A673 (cell line): ENCODE measurements at regions of chr11 and their contacts with region 1.

Region 1: DNA sequence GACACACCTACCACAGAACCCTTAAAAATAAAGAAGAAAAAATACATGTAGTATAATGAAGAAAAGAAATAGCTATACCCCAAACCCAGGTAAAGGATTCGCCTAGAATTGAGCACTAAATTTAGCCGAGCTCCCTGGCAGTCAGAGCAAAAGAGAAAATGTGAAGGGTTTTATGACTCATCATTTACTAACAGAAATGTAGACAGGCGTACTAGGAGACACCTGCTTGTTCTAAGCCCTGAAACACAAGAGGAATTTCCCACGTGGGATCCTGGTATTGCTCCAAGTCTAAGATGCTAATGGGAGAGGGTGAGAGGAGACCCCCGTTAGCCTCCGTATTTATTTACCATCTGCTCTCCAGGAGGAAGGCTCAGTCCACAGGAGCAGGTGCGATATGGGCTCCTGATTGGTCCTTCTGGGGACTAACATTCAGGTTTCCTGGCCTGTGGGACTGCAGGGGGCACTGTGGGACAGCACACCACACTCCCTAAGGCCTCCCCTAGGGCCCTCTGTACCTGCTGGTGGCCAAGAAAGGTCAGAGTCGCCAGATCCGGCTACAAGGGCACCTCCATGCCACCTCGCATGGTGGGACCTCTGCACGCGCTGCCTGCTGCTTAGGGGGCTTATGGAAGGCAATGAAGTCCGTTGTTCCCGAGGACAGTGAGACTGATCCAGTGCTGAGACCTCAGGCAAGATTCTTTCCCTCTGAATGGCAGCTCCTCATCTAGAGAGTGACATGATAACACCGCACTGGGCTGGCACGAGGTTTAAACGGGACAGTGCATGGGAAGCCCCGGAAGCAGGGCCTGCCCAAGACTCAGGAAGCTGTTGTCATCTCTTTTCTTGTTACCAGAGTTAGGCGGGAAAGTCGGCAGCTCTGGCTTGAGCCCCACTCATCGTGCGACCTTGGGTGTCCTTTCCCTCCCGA is 25.8 kb downstream of the KCNC1 start:
- DNase-seq: peak; percentile 39
- H3K4me3 ChIP-seq: no peak overlapping the region
- H3K27ac ChIP-seq: no peak overlapping the region
- H3K4me1 ChIP-seq: no peaks in the 10 kb centered on the region
- H3K27me3 ChIP-seq: no peaks in the 10 kb centered on the region
- CTCF ChIP-seq: peak; percentile 55

Region 2: DNA sequence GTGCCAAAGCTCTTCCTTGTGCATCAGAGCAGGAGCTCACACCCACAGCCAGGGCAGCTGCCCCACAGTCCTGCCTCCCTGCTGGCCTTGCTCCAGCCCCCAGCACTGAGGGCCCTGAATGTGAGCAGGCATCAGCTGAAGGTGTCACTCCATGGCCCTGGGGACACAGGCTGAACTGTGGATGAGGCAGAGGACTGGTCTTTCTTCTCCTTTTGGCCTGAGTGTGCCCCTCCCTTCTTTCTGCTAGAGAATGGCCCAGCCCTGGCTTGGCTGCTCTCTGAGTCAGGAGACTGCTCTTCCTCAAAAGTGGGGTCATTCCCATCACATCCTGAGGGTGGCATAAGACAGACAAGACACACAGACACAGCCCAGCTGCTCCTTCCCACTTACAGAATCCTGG is 197.1 kb before region 1 on chr11:
- CTCF ChIA-PET with region 1: no interaction called
- POLR2A ChIA-PET with region 1: no interaction called
- intact Hi-C with region 1: no loop called
- DNase-seq: no peak
- H3K4me3 ChIP-seq: no peak overlapping the region
- H3K27ac ChIP-seq: no peak overlapping the region
- H3K4me1 ChIP-seq: no peaks in the 10 kb centered on the region
- H3K27me3 ChIP-seq: no peaks in the 10 kb centered on the region
- CTCF ChIP-seq: no peak

Region 3: DNA sequence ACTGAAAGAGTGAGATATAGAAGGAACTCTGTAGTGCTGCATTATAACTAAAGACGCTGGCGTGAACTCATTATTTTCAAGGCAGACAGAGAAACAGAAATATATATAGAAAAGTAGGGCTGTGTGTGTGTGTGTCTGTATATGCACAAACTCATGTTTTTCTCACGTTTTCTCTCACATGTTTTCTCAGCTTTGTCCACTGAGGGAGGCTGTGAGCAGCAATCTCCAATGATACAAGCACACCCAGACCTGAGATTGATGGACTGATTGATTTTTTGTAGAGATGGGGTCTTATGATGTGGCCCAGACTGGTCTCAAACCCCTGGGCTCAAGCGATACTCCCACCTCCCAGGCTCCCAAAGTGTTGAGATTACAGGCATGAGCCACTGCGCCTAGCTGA is 130.0 kb after region 1 on chr11:
- CTCF ChIA-PET with region 1: interaction called, 12 read pairs
- POLR2A ChIA-PET with region 1: no interaction called
- intact Hi-C with region 1: no loop called
- DNase-seq: no peak
- H3K4me3 ChIP-seq: no peak overlapping the region
- H3K27ac ChIP-seq: no peak overlapping the region
- H3K4me1 ChIP-seq: peaks cover 15% of the 10 kb centered on the region
- H3K27me3 ChIP-seq: no peaks in the 10 kb centered on the region
- CTCF ChIP-seq: peak; percentile 37